SK-N-SH (cell line): ENCODE measurements at regions of chr16 and their contacts with region 1.

Region 1: DNA sequence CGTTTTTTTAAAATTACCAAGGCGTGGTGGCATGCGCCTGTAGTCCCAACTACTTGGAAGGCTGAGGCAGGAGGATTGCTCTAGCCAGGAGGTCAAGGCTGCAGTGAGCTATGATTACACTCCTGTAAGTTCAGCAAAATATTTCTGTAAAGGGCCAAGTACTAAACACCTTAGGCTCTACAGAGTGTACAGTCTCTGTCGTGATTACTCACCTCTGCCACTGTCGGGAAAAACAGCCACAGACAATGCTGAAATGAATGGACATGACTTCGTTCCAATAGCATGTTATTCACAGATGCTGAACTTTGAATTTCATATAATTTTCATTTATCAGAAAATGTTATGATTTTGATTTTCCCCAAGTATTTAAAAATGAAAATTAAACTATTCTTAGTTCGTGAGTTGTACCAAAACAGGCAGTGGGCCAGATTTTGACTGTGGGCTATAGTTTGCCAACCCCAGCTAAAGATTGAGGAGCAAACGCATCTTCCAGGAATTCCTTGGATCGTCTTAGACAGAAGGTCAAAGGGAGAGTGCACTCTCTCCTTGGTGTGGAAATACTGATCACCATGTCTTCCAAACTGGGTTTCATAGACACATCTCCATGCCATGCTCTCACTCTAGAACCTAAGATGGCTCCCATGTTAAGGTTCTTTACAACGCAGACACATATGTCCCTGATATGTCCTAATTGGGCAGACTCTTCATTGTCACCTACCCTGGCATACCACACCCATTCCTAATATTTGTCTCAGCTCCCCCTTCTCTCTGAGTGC is 89.5 kb downstream of the MARF1 start:
- DNase-seq: no peak
- H3K4me3 ChIP-seq: no peak overlapping the region
- H3K27ac ChIP-seq: no peak overlapping the region
- H3K4me1 ChIP-seq: no peaks in the 10 kb centered on the region; a peak in 1 of 4 replicates
- H3K27me3 ChIP-seq: no peaks in the 10 kb centered on the region
- CTCF ChIP-seq: no peak
- EP300 ChIP-seq: no peak
- RAD21 ChIP-seq: no peak

Region 2: DNA sequence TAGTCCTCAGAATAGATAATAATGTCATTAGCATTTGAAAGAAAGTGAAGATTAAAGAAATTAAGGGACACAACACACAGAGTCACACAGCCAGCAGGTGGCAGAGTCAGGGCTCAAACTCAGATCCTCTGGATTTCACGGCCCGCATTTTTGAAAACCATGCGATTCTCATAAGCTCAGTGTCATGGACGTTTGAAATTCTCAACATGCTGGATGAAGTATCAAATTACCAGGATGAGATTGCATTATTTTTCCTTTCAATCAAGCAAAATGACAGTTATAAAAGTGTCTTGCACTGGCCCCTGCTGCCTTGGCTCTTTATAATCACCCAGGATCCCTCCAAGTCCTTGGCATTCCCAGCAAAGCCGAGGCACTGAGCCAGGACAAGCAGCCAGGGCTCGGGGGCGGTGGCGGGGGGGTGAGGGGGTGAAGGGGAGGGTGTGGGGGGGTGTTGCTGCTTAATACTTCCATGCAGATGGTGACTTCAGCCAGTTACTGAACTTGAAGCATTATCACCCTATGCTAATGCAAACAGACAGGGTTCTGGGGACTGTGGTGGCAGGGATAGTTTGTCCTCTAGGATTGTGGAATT is 125.8 kb before region 1 on chr16:
- CTCF ChIA-PET with region 1: interaction called, 62 read pairs
- POLR2A ChIA-PET with region 1: no interaction called
- DNase-seq: peak; percentile 75
- H3K4me3 ChIP-seq: no peak overlapping the region
- H3K27ac ChIP-seq: no peak overlapping the region; a peak in 1 of 4 replicates
- H3K4me1 ChIP-seq: no peaks in the 10 kb centered on the region
- H3K27me3 ChIP-seq: no peaks in the 10 kb centered on the region; the same call in 1 of the 2 replicates
- CTCF ChIP-seq: peak; percentile 83
- EP300 ChIP-seq: 0 out of 4 replicates have a peak, but pooled peaks of 1 of the 2 experiments have one; percentile 39
- RAD21 ChIP-seq: peak; percentile 69

Region 3: GRCh38 chr16:15682105-15682570 is 128.6 kb after region 1 on chr16:
- CTCF ChIA-PET with region 1: no interaction called
- POLR2A ChIA-PET with region 1: no interaction called
- DNase-seq: no peak
- H3K4me3 ChIP-seq: no peak overlapping the region
- H3K27ac ChIP-seq: peak overlapping the region in 1 of 2 experiments; percentile 47; a peak in 2 of 4 replicates
- H3K4me1 ChIP-seq: no peaks in the 10 kb centered on the region; a peak in 1 of 4 replicates
- H3K27me3 ChIP-seq: no peaks in the 10 kb centered on the region
- CTCF ChIP-seq: peak; percentile 67
- EP300 ChIP-seq: no peak
- RAD21 ChIP-seq: no peak